Activated CD4-positive, alpha-beta T cell treated with anti-CD3 and anti-CD28 coated beads, Interleukin-2, amount 10 ng/mL, durations not matched to agents 24 days and 14 days (primary cell): ENCODE measurements at regions of chr19 and their contacts with region 1.

Region 1: GRCh38 chr19:52570000-52570861 is at the start of gene ZNF701:
- DNase-seq: peak; percentile 99
- H3K4me3 Mint-ChIP-seq: peak within 1 kb of the TSS; percentile 88
- H3K27ac Mint-ChIP-seq: peak within 1 kb of the TSS; percentile 89
- H3K4me1 Mint-ChIP-seq: peaks cover 23% of the 10 kb centered on the region
- H3K27me3 Mint-ChIP-seq: no peaks in the 10 kb centered on the region
- total RNA-seq, gene ZNF701: 19.3 and 21.0 TPM in 2 replicates

Region 2: GRCh38 chr19:52535771-52536447 is 34.3 kb before region 1 on chr19:
- intact Hi-C with region 1: loop called (anchors 1 kb)
- DNase-seq: peak; percentile 96
- H3K4me3 Mint-ChIP-seq: peak overlapping the region; percentile 85
- H3K27ac Mint-ChIP-seq: peak overlapping the region; percentile 91
- H3K4me1 Mint-ChIP-seq: peaks cover 19% of the 10 kb centered on the region
- H3K27me3 Mint-ChIP-seq: no peaks in the 10 kb centered on the region

Region 3: DNA sequence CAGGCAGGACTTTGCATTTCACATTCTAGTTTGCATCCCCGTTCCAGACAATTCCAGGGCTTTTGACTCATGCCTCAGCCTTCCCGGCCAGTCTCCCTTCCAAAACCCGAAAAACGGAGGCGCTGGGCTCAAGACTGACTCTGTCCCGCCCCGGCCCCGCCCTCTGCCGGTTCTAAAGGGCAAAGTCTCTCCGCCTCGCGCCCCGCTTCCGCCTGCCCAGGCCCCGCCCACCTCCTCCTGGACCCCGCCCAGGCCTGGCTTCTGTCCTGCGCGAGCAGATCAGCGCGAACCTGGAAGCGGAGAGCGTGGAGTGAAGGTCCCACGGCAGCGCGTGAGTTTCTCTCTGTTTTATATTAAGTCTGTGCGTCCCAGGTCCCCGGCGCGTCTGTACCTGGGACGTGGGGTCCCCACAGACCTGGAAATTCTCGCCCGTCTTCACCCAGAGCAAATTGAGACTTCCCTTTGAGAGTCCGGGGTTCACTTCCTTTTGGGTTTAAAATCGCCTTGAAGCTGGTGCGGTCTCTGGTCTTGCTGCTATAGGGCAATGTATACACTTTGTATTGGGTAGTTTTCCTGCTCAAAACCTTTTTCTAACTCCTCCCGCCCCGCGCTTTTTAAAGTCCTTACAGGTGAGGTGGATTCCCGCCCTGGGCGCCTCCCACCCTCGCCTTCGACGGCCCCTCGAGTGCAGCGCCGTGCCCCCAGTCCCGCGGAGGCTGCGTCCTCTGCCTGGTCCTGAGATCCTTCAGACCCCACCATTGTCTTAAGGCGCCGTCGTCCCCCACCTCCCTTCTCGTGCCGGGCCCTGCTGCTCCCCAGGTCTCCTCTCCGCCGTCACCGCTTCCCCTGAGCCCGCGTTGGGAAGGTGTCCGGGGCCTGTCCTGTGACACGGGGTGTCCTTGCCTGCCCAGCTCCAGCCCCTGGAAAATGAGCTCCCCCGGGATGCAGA is 31.1 kb after region 1 on chr19:
- intact Hi-C with region 1: loop called (anchors 1 kb)
- DNase-seq: peak; percentile 98
- H3K4me3 Mint-ChIP-seq: peak overlapping the region; percentile 89
- H3K27ac Mint-ChIP-seq: peak overlapping the region; percentile 73
- H3K4me1 Mint-ChIP-seq: peaks cover 12% of the 10 kb centered on the region
- H3K27me3 Mint-ChIP-seq: no peaks in the 10 kb centered on the region

Region 4: DNA sequence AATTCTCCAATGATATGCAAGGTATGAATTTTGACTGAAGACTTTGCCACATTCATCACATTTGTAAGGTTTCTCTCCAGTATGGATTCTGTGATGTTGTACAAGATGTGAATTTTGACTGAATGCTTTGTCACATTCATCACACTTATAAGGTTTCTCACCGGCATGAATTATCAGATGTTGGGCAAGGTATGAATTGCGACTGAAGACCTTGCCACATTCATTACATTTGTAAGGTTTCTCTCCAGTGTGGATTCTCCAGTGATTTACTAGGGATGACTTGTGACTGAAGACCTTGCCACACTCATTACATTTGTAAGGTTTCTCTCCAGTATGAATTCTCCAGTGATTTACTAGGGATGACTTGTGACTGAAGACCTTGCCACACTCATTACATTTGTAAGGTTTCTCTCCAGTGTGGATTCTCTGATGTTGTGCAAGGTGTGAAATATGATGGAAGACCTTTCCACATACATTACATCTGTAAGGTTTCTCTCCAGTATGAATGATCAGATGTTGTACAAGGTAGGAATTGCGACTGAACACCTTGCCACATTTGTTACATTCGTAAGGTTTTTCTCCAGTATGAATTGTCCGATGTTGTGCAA is 43.2 kb after region 1 on chr19:
- intact Hi-C with region 1: no loop called
- DNase-seq: no peak
- H3K4me3 Mint-ChIP-seq: no peak overlapping the region
- H3K27ac Mint-ChIP-seq: no peak overlapping the region
- H3K4me1 Mint-ChIP-seq: no peaks in the 10 kb centered on the region
- H3K27me3 Mint-ChIP-seq: no peaks in the 10 kb centered on the region